Activated T-helper 1 cell treated with anti-CD3 and anti-CD28 coated beads, Interleukin-12 subunit alpha, Interleukin-12 subunit beta, Interleukin-2, Interleukin-4 antibody, amounts not matched to agents 30 ng/mL and 10 ng/mL and 1 ng/mL, durations not matched to agents 14 hours and 24 hours and 36 hours (primary cell): ENCODE measurements at regions of chr2 and their contacts with region 1.

Region 1: DNA sequence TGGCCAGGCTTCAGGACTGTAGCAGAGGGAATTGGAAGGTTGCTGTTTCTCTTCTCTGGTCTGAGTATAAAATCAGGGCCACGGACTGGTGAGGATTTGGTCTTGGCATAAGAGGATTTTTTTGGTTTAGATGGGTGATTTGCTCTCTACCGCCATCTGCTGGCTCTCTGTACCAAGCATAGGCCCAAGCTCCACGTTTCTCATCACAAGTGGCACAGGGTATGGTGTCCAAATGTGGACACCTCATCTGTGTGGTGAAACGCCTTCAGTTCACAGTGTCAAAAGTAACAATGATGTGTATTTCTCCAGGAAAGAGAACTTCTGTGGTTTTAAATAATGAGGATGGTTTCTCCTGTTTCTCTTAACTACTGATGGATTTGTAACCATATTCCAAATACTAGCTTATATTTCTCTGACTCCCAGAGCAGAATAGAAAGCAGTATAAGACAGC is 115.1 kb downstream of the EML6 start:
- DNase-seq: peak; percentile 28
- H3K4me3 Mint-ChIP-seq: no peak overlapping the region
- H3K27ac Mint-ChIP-seq: no peak overlapping the region
- H3K4me1 Mint-ChIP-seq: no peaks in the 10 kb centered on the region
- H3K27me3 Mint-ChIP-seq: no peaks in the 10 kb centered on the region

Region 2: DNA sequence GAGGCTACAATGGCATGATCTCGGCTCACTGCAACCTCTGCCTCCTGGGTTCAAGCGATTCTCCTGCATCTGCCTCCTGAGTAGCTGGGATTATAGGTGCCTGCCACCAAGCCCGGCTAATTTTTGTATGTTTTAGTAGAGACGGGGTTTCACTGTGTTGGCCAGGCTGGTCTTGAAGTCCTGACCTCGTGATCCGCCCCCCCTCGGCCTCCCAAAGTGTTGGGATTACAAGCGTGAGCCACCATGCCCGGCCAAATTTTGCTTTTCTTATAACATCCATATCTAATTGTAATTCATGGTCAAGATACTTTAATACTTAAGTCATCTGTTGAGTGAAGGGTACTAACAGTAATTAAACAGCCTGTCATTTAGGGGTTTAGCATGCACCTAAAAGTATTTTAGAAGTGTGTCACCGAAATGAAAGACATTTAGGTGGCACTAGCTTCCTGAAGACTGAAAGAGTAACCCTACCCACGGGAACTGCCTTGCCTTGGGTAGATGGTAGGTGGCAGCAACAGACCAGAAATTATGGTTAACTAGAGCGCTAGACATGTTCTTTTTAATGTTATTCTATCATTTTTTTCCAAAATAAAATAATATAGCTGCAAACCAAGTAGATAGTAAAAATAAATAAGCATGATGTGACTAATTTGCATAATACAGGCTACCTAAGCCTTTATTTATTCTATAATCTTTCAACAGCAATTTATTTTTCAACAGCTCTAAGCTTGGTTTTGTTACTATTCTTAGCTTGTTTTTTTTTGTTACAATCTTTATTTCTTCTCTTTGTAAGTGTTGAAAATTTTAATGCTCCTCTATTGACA is 731.8 kb before region 1 on chr2:
- intact Hi-C with region 1: loop called (anchors 2 kb)
- DNase-seq: peak; percentile 11
- H3K4me3 Mint-ChIP-seq: no peak overlapping the region
- H3K27ac Mint-ChIP-seq: no peak overlapping the region
- H3K4me1 Mint-ChIP-seq: peaks cover 6% of the 10 kb centered on the region
- H3K27me3 Mint-ChIP-seq: peaks cover 8% of the 10 kb centered on the region

Region 3: DNA sequence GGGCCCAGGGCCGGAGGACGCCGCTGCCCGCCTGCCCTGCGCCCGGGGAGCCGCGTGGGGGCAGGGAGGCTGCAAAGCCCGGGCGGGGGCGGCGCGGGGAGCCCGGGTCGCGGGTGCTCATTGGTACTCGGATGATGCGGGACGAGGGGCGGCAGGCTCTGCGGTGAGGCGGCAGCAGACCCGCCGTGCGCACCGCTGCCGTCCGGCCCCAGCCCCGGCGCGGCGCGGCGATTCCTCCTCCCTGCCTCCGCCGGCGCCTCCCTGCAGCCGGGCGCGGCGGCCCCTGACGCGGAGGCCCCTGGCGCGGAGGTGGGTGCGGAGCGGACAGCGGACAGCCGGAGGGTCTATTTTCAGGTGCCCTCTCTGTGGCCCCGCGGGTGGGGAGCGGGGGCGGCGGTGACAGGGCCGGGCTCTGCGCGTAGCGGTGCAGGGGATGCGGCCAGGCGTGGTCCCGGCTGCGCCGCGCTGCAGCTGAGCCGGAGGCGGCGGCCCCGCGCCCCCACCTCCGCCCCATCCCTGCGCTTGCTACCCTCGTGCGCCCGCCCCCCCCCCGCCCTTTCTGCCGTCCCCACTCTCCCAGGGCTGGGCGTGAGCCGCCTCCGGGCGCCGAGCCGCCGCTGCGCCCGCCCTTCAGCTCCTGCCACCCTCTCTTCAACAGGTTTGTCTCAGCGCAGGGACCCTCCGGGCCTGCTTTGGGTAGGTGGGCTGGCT is 381.8 kb before region 1 on chr2:
- intact Hi-C with region 1: no loop called
- DNase-seq: no peak
- H3K4me3 Mint-ChIP-seq: peak overlapping the region; percentile 84
- H3K27ac Mint-ChIP-seq: peak overlapping the region; percentile 55
- H3K4me1 Mint-ChIP-seq: peaks cover 19% of the 10 kb centered on the region
- H3K27me3 Mint-ChIP-seq: peaks cover 64% of the 10 kb centered on the region

Region 4: DNA sequence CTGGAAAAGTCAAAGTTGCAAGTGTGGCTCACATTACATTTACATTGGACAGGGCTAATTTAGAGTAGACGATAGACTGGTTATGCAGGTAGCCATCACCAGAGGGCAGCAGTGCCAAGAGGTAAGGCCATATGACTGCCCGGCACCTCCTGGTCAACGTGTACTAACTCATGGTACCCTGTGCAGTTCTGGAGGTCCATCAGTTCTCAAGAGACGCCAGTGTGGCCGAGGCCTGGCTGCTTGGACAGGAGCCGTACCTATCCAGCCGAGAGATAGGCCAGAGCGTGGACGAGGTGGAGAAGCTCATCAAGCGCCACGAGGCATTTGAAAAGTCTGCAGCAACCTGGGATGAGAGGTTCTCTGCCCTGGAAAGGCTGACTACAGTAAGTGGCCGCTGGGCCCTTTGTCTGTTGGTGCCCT is 180.9 kb before region 1 on chr2:
- intact Hi-C with region 1: loop called (anchors 2 kb)
- DNase-seq: no peak
- H3K4me3 Mint-ChIP-seq: no peak overlapping the region
- H3K27ac Mint-ChIP-seq: no peak overlapping the region
- H3K4me1 Mint-ChIP-seq: peaks cover 20% of the 10 kb centered on the region
- H3K27me3 Mint-ChIP-seq: no peaks in the 10 kb centered on the region

Region 5: GRCh38 chr2:54665436-54665856 is 173.2 kb before region 1 on chr2:
- intact Hi-C with region 1: loop called (anchors 1 kb)
- DNase-seq: peak; percentile 33
- H3K4me3 Mint-ChIP-seq: no peak overlapping the region
- H3K27ac Mint-ChIP-seq: no peak overlapping the region
- H3K4me1 Mint-ChIP-seq: peaks cover 20% of the 10 kb centered on the region
- H3K27me3 Mint-ChIP-seq: no peaks in the 10 kb centered on the region

Region 6: DNA sequence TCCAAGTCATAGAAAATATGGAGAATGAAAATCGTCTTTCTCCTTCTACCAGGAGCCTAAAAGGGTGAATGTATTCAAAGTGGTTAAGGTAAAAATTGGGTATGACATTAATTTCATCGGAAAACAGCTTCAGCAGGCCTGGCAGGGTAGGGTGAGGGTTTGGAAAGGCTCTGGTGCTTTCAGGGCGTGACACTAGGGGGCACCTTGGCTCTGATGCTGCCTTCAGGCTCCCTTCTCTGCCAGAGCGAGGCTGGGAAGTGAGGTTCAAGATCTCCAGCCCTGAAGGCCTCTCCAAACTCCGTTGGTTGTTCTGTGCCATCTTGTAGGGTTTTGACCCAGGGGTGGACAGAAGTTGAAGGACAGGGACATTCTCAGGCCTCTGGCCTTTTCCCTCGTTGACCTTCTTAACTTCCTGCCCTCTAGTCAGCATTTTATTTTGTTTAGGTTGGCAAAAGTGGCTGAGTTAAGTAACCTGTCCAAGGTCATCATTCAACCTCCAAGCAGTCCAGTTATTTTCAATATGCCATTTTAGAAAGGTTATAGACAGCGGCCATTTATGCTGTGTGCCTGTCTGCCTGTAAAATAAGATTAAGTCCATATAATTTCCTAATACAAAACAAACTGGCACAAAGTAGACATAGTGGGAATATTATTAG is 74.8 kb before region 1 on chr2:
- intact Hi-C with region 1: loop called (anchors 1 kb)
- DNase-seq: no peak
- H3K4me3 Mint-ChIP-seq: no peak overlapping the region
- H3K27ac Mint-ChIP-seq: no peak overlapping the region
- H3K4me1 Mint-ChIP-seq: peaks cover 11% of the 10 kb centered on the region
- H3K27me3 Mint-ChIP-seq: peaks cover 6% of the 10 kb centered on the region

Region 7: GRCh38 chr2:55175254-55176025 is 336.8 kb after region 1 on chr2:
- intact Hi-C with region 1: loop called (anchors 2 kb)
- DNase-seq: no peak
- H3K4me3 Mint-ChIP-seq: no peak overlapping the region
- H3K27ac Mint-ChIP-seq: no peak overlapping the region
- H3K4me1 Mint-ChIP-seq: no peaks in the 10 kb centered on the region
- H3K27me3 Mint-ChIP-seq: no peaks in the 10 kb centered on the region